IMR-90 (cell line): ENCODE measurements at regions of chr11 and their contacts with region 1.

Region 1: DNA sequence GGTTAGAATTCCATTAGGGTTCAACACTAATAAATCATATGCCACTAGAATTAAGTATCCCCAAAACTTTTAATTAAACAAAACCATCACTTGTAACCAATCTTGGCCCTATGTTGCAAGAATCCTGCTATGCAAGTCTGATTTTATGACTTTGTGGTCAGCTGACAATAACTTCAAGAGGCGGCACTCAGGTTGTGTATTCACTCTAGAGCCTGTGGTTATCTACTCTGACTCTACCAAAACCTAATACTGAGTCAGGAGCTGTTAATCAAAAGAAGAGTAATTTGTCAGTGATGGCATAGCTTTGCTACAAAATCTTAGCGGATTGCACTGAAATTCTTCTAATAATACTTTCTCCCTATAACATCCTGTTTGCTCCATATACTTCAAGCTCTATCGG is 253.7 kb downstream of the AASDHPPT start:
- DNase-seq: no peak
- ATAC-seq: no peak
- H3K4me3 ChIP-seq: no peak overlapping the region
- H3K27ac ChIP-seq: no peak overlapping the region
- H3K4me1 ChIP-seq: no peaks in the 10 kb centered on the region
- H3K27me3 ChIP-seq: no peaks in the 10 kb centered on the region
- CTCF ChIP-seq: no peak
- POLR2A ChIP-seq: no peak
- RAD21 ChIP-seq: no peak

Region 2: GRCh38 chr11:106585061-106585460 is 253.9 kb after region 1 on chr11:
- CTCF ChIA-PET with region 1: no interaction called
- POLR2A ChIA-PET with region 1: no interaction called
- dilution Hi-C with region 1: no loop called
- in situ Hi-C with region 1: no loop called
- intact Hi-C with region 1: loop called (anchors 5 kb)
- DNase-seq: peak; percentile 51
- ATAC-seq: peak; percentile 64
- H3K4me3 ChIP-seq: no peak overlapping the region
- H3K27ac ChIP-seq: no peak overlapping the region
- H3K4me1 ChIP-seq: no peaks in the 10 kb centered on the region
- H3K27me3 ChIP-seq: no peaks in the 10 kb centered on the region
- CTCF ChIP-seq: peak; percentile 70
- POLR2A ChIP-seq: no peak
- RAD21 ChIP-seq: peak; percentile 82